Activated CD4-positive, alpha-beta memory T cell treated with anti-CD3 and anti-CD28 coated beads, Interleukin-2, amount 10 ng/mL, durations not matched to agents 7 days and 5 days (primary cell): ENCODE measurements at regions of chr1 and their contacts with region 1.

Region 1: GRCh38 chr1:26811057-26811456 is 15.4 kb upstream of the ZDHHC18 start:
- DNase-seq: no peak
- H3K4me3 Mint-ChIP-seq: no peak overlapping the region
- H3K27ac Mint-ChIP-seq: peak overlapping the region; percentile 70
- H3K4me1 Mint-ChIP-seq: peaks cover 33% of the 10 kb centered on the region
- H3K27me3 Mint-ChIP-seq: no peaks in the 10 kb centered on the region

Region 2: DNA sequence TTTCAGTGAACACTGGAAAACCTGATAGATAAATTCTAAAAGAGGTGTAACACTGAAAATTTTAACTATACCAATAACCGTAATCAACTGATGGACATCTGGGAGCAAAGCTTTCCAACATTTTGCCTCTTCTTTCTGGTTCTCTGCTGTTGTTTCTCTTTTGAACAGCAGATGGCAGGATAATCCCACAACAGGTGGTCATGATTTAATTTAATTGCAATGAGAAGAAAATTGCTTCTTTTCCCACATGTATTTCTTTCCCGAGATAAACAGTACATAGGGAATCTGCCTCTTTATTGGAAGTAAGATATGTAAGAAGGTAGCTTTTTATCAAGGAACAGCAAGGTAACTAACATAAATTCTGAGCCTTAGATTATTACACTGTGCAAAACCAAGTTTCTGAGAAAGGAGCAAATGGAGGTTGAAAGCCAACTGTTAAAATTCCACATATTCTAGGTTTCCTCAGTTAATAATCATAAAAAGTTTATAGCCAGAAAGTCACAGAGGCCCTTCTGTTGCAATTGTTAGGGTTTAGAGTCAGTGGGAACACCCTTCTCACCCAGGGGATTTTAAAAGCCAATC is 208.6 kb before region 1 on chr1:
- CTCF ChIA-PET with region 1: interaction called, 11 read pairs
- POLR2A ChIA-PET with region 1: interaction called, 3 read pairs
- DNase-seq: peak; percentile 38
- H3K4me3 Mint-ChIP-seq: no peak overlapping the region
- H3K27ac Mint-ChIP-seq: no peak overlapping the region
- H3K4me1 Mint-ChIP-seq: peaks cover 11% of the 10 kb centered on the region
- H3K27me3 Mint-ChIP-seq: peaks cover 20% of the 10 kb centered on the region

Region 3: DNA sequence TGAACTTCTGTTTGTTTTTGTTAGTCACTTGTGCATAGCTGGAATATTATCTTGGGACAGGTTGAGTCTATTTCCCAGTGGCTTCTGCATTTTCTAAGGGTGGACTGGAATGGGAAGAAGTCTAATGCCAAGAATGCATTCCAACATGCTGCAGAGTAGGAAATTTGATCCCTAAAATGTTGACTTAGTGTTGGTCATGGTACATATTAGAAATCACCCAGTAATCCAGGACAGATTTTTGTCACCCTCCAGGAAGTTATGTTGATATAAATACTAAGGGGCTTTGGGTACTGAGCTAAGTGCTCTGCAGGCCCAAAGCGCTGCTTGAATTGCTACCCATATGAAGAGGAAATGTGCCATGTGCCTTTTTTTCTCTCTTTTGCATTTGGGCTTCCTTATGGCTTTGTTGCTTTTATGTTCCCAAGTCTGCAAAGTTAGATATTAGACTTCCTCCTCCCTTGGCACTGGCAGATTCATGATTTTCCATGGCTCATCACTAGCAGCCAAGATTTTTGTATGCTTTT is 105.2 kb before region 1 on chr1:
- CTCF ChIA-PET with region 1: no interaction called
- POLR2A ChIA-PET with region 1: no interaction called
- DNase-seq: no peak
- H3K4me3 Mint-ChIP-seq: no peak overlapping the region
- H3K27ac Mint-ChIP-seq: no peak overlapping the region
- H3K4me1 Mint-ChIP-seq: peaks cover 33% of the 10 kb centered on the region
- H3K27me3 Mint-ChIP-seq: no peaks in the 10 kb centered on the region

Region 4: DNA sequence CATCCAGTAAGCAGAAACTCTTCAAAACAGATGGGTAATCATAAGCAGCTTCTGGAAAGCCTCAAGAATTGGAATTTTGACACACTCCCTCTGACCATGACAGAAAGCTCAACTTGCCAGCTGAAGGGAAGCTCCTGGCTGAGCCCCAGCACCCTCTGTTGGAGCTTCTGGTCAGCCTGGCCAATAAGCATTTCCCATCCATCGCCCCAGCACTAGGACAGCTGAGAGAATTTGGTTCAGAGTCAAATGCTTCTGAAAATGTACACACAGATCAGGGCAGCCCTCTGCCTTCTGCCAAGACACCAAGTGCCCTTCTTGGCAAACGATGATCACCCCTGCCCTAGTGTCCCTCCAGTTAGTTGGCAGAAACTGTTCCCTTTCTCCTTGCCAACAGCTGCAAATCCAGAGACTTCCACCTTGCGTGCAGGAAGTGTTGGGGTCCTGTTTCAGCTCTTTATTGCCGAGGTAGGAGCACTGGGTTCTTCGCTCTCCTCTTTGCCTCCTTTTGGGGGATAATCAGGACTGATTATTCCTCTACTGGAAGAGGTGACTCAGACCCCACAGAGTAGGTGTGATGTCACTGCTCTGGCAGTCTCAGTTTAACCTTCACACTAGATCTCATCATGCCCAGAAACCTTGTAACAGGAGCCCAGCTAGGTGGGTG is 11.4 kb before region 1 on chr1:
- CTCF ChIA-PET with region 1: interaction called, 67 read pairs
- POLR2A ChIA-PET with region 1: interaction called, 38 read pairs
- DNase-seq: peak; percentile 30
- H3K4me3 Mint-ChIP-seq: peak overlapping the region; percentile 52
- H3K27ac Mint-ChIP-seq: peak overlapping the region; percentile 89
- H3K4me1 Mint-ChIP-seq: peaks cover 55% of the 10 kb centered on the region
- H3K27me3 Mint-ChIP-seq: no peaks in the 10 kb centered on the region

Region 5: GRCh38 chr1:26826261-26827105 is 15.4 kb after region 1 on chr1 and contains the start of gene ZDHHC18:
- CTCF ChIA-PET with region 1: interaction called, 98 read pairs
- POLR2A ChIA-PET with region 1: interaction called, 43 read pairs
- DNase-seq: peak; percentile 78
- H3K4me3 Mint-ChIP-seq: peak within 1 kb of the TSS; percentile 98
- H3K27ac Mint-ChIP-seq: peak within 1 kb of the TSS; percentile 90
- H3K4me1 Mint-ChIP-seq: peaks cover 57% of the 10 kb centered on the region
- H3K27me3 Mint-ChIP-seq: no peaks in the 10 kb centered on the region
- total RNA-seq, gene ZDHHC18: 73.3 to 76.3 TPM

Region 6: GRCh38 chr1:26833432-26834405 is 22.7 kb after region 1 on chr1:
- CTCF ChIA-PET with region 1: interaction called, 98 read pairs
- POLR2A ChIA-PET with region 1: interaction called, 43 read pairs
- DNase-seq: peak; percentile 94
- H3K4me3 Mint-ChIP-seq: peak overlapping the region; percentile 66
- H3K27ac Mint-ChIP-seq: peak overlapping the region; percentile 99
- H3K4me1 Mint-ChIP-seq: peaks cover 80% of the 10 kb centered on the region
- H3K27me3 Mint-ChIP-seq: no peaks in the 10 kb centered on the region

Region 7: DNA sequence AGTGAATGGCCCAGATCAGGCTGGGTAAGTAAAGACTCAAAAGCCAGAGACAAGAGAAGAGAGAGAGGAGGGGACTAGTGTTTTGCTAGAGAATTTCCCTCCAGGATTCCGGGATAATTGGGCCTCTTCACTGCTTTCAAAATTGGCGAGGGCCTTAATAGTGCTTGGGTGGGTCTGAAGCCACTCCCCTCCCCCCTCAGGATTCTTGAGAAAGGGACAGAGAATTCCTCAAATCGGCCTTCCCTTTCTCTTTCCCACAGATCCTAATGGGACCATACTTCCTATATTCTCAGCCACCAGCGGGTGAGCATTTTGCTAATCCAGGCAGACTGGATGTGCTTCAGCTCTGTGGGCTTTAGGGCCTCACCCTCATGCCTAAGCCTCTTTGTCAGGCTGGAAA is 63.8 kb after region 1 on chr1:
- CTCF ChIA-PET with region 1: interaction called, 15 read pairs
- POLR2A ChIA-PET with region 1: no interaction called
- DNase-seq: no peak
- H3K4me3 Mint-ChIP-seq: no peak overlapping the region
- H3K27ac Mint-ChIP-seq: no peak overlapping the region
- H3K4me1 Mint-ChIP-seq: peaks cover 10% of the 10 kb centered on the region
- H3K27me3 Mint-ChIP-seq: no peaks in the 10 kb centered on the region